ENCODE measurements at regions of chr19 and their contacts with region 1.

Region 1: GRCh38 chr19:56080669-56081401 is 40.3 kb downstream of the ZNF787 start:
- DNase-seq: peak in 1 of 2 experiments; percentile 94
- H3K4me3 ChIP-seq: peak overlapping the region; percentile 38 to 74 (median 46); a peak in 7 of 8 replicates
- H3K27ac ChIP-seq: no peak overlapping the region
- H3K4me1 ChIP-seq: peaks cover 0 to 14% (median 6%) of the 10 kb centered on the region in 4 experiments; a peak in 6 of 7 replicates
- H3K27me3 ChIP-seq: no peaks in the 10 kb centered on the region
- CTCF ChIP-seq: peak; percentile 70 to 86 (median 72)
- EP300 ChIP-seq: peak in 1 of 2 experiments; percentile 16; a peak in 1 of 3 replicates
- POLR2A ChIP-seq: no peak
- RAD21 ChIP-seq: peak; percentile 58 to 65

Region 2: DNA sequence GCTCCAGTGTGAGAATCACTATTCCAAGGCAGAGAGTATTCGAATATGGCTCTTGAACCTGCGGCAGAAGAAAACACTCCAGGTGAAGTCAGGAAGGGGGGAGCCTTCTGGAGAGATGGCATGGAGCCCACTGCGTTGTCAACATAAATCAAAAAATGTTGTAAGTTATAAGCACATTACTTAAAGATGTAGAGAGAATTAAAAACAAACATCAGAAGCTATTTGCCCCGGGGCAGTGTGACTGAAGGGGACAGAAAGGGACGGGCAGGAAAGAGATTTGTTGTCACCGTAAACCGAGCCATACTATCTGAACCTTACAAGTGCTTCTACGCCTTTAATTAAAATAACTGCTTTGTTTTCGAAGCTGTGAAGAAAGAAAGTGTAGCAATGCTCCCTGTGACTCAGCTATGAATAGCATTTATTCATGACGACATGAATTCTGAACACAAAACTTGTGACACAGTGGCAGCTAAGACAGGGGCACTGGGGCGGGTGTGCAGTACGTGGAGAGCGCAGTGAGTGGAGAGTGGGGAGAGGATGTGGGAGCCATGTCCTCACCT is 10.2 kb after region 1 on chr19:
- CTCF ChIA-PET with region 1: interaction called, 20 read pairs
- POLR2A ChIA-PET with region 1: interaction called, 15 read pairs
- DNase-seq: no peak
- H3K4me3 ChIP-seq: no peak overlapping the region
- H3K27ac ChIP-seq: no peak overlapping the region
- H3K4me1 ChIP-seq: peaks cover 0 to 5% (median 0%) of the 10 kb centered on the region in 4 experiments; a peak in 1 of 7 replicates
- H3K27me3 ChIP-seq: no peaks in the 10 kb centered on the region
- CTCF ChIP-seq: no peak
- EP300 ChIP-seq: no peak
- POLR2A ChIP-seq: no peak
- RAD21 ChIP-seq: no peak

Region 3: GRCh38 chr19:56155124-56155687 is 74.4 kb after region 1 on chr19:
- CTCF ChIA-PET with region 1: interaction called, 15 read pairs
- POLR2A ChIA-PET with region 1: interaction called, 4 read pairs
- DNase-seq: peak in 1 of 2 experiments; percentile 87
- H3K4me3 ChIP-seq: no peak overlapping the region
- H3K27ac ChIP-seq: 0 out of 2 replicates have a peak overlapping the region, but pooled peaks have one; percentile 11
- H3K4me1 ChIP-seq: peaks cover 5 to 10% (median 8%) of the 10 kb centered on the region in 4 experiments
- H3K27me3 ChIP-seq: no peaks in the 10 kb centered on the region
- CTCF ChIP-seq: peak; percentile 87 to 97 (median 96)
- EP300 ChIP-seq: no peak
- POLR2A ChIP-seq: no peak
- RAD21 ChIP-seq: peak; percentile 85 to 88

Region 4: DNA sequence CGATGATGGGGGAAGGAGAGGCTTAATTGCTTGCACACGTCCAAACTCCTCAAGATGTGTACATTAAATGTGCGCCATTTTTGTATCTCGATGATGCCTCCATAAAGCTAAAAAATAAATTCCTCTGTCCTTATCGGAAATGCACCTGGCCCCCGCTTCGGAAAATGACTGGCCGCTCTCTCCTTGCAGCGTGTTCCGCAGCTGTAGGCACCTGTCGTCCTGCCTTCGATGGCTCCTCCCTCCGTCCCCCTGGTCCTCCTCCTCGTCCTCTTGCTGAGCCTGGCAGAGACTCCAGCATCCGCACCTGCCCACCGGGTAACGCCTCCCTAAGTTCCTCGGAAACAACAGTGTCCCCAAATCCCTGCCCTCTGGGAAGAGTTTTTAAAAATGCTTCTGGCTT is 96.0 kb after region 1 on chr19:
- CTCF ChIA-PET with region 1: interaction called, 13 read pairs
- POLR2A ChIA-PET with region 1: interaction called, 4 read pairs
- DNase-seq: no peak
- H3K4me3 ChIP-seq: no peak overlapping the region
- H3K27ac ChIP-seq: no peak overlapping the region
- H3K4me1 ChIP-seq: peaks cover 0 to 3% (median 0%) of the 10 kb centered on the region in 4 experiments; a peak in 1 of 7 replicates
- H3K27me3 ChIP-seq: no peaks in the 10 kb centered on the region; a peak in 1 of 7 replicates
- CTCF ChIP-seq: no peak
- EP300 ChIP-seq: no peak
- POLR2A ChIP-seq: no peak
- RAD21 ChIP-seq: no peak

Region 5: GRCh38 chr19:56333505-56333904 is 252.7 kb after region 1 on chr19:
- CTCF ChIA-PET with region 1: interaction called, 12 read pairs
- POLR2A ChIA-PET with region 1: no interaction called
- DNase-seq: peak in 1 of 2 experiments; percentile 49
- H3K4me3 ChIP-seq: no peak overlapping the region
- H3K27ac ChIP-seq: no peak overlapping the region
- H3K4me1 ChIP-seq: no peaks in the 10 kb centered on the region
- H3K27me3 ChIP-seq: no peaks in the 10 kb centered on the region
- CTCF ChIP-seq: peak in 2 of 3 experiments; percentile 59 to 61; a peak in 3 of 4 replicates
- EP300 ChIP-seq: no peak
- POLR2A ChIP-seq: no peak
- RAD21 ChIP-seq: peak; percentile 81